OCI-LY7 (cell line): ENCODE measurements at regions of chr2 and their contacts with region 1.

Region 1: GRCh38 chr2:55168221-55169154 is 63.6 kb downstream of the CLHC1 start:
- DNase-seq: peak; percentile 72
- H3K4me3 ChIP-seq: no peak overlapping the region
- H3K27ac ChIP-seq: no peak overlapping the region
- H3K4me1 ChIP-seq: no peaks in the 10 kb centered on the region
- CTCF ChIP-seq: peak; percentile 96

Region 2: DNA sequence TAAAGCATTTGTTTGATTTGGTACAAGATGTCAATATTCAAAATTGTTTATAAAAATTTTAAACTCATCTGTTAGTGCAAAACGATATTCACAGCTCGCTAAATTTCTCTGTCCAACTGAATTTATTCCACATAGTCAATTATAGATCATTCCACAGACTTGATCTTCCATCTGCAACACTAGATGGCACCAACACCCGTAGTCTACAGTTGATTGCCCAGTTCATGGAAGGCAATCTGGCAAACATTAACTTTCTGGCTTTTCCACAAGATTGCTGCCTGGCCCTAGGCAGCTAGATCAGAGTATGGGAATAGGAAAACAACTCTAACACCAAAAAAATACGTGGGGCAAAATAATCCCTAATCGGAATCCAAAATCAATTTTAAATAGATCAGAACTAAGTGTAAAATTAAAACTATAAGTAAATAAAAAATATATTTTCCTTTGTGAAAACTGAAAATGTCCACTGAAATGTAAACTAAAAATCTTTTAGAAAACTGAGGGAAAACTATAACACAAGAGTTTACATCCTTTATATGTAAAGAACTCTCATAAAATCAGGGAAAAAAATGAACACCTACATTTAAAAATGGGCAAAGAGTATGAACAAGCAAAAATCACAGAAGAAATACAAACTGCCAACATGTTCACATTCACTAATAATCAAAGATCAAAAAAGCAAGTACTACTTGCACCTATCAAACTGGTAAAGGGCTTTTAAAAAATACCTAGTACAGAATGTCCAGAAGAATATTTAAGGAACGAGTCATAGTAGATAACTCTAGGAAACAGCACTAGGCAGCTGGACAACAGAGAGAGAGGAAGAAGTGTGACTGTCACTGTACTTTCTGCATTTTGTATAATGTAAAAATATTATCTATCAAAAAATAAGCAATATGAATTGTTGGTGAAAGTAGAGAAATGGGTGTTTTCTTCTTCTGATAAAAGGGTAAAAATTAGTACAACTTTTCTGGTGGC is 153.2 kb before region 1 on chr2:
- CTCF ChIA-PET with region 1: interaction called, 3 read pairs
- POLR2A ChIA-PET with region 1: interaction called, 5 read pairs
- intact Hi-C with region 1: loop called (anchors 1 kb)
- DNase-seq: peak; percentile 71
- H3K4me3 ChIP-seq: no peak overlapping the region
- H3K27ac ChIP-seq: no peak overlapping the region
- H3K4me1 ChIP-seq: peaks cover 46% of the 10 kb centered on the region
- CTCF ChIP-seq: peak; percentile 93